ENCODE measurements at regions of chr19 and their contacts with region 1.

Region 1: GRCh38 chr19:40570313-40571004 is 6.2 kb upstream of the SHKBP1 start:
- DNase-seq: peak; percentile 100
- H3K4me3 Mint-ChIP-seq: peak overlapping the region; percentile 66
- H3K27ac Mint-ChIP-seq: peak overlapping the region; percentile 39
- H3K4me1 Mint-ChIP-seq: peaks cover 13% of the 10 kb centered on the region
- H3K27me3 Mint-ChIP-seq: no peaks in the 10 kb centered on the region
- CTCF ChIP-seq: peak; percentile 33

Region 2: GRCh38 chr19:40510526-40511115 is 59.8 kb before region 1 on chr19:
- CTCF ChIA-PET with region 1: no interaction called
- POLR2A ChIA-PET with region 1: no interaction called
- intact Hi-C with region 1: no loop called
- DNase-seq: no peak
- H3K4me3 Mint-ChIP-seq: no peak overlapping the region
- H3K27ac Mint-ChIP-seq: no peak overlapping the region
- H3K4me1 Mint-ChIP-seq: no peaks in the 10 kb centered on the region
- H3K27me3 Mint-ChIP-seq: peaks cover 30% of the 10 kb centered on the region
- CTCF ChIP-seq: no peak

Region 3: GRCh38 chr19:40603389-40604135 is 33.1 kb after region 1 on chr19:
- CTCF ChIA-PET with region 1: interaction called, 10 read pairs
- POLR2A ChIA-PET with region 1: interaction called, 39 read pairs
- intact Hi-C with region 1: loop called (anchors 1 kb)
- DNase-seq: peak; percentile 99
- H3K4me3 Mint-ChIP-seq: peak overlapping the region; percentile 79
- H3K27ac Mint-ChIP-seq: peak overlapping the region; percentile 69
- H3K4me1 Mint-ChIP-seq: peaks cover 47% of the 10 kb centered on the region
- H3K27me3 Mint-ChIP-seq: no peaks in the 10 kb centered on the region
- CTCF ChIP-seq: no peak

Region 4: DNA sequence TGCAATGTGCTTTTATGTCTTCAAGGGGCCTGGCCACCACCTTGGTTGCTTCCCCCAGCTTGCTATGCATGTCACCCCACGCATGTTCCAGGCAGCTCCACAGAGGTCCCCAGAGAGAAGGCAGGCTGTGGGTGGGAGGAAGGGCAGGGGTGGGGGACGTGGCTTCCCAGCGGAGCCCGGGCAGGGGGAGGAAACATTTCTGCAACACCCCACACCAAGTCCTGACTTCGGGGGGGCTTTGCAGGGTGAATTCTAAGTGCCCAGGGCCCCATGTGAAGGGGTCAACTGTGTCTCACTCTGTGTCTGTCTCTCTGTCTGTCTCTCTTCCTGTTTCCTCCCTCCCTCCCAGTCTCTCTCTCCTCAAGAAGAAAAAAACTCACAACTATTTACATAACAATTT is 70.3 kb after region 1 on chr19:
- CTCF ChIA-PET with region 1: interaction called, 18 read pairs
- POLR2A ChIA-PET with region 1: no interaction called
- intact Hi-C with region 1: no loop called
- DNase-seq: no peak
- H3K4me3 Mint-ChIP-seq: no peak overlapping the region
- H3K27ac Mint-ChIP-seq: no peak overlapping the region
- H3K4me1 Mint-ChIP-seq: peaks cover 3% of the 10 kb centered on the region
- H3K27me3 Mint-ChIP-seq: no peaks in the 10 kb centered on the region
- CTCF ChIP-seq: no peak

Region 5: DNA sequence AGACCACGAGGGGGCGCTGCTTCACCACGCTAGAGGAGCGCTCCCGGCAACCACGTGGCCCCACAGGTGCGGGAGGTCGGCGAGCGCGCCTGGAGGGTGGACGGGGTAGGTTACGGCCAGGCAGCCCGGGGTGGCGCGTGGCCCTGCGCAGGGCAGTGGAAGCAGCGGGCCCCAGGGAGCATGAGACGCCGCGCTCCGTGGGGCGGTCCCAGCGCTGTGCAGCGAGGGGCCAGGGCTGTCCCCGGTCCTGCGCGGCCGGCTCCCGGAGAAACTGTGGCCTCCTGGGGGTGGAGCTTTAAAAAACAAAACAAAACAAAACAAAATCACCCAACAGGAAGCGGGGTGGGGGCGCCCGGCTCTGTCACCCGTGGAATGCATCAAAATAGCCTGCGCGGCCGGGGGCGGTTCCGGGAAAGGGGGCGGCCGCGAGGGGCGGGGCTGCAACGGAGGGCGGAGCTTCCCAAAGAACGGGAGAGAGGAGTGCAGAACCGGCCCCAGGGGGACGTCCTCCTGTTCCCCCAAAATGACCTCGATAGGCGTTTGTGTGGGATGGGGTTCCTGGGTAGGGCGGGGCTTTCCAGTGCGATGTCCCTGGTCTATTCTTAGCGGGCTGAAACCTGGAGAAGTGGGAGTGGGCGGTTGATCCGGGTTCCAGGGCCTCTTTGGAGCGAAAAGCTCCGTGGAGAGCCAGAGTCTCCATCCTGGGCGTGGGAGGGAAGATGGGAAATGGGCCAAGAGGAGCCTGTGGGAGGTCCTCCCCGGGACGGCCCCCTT is 92.6 kb after region 1 on chr19:
- CTCF ChIA-PET with region 1: no interaction called
- POLR2A ChIA-PET with region 1: no interaction called
- intact Hi-C with region 1: no loop called
- DNase-seq: peak; percentile 83
- H3K4me3 Mint-ChIP-seq: peak overlapping the region; percentile 77
- H3K27ac Mint-ChIP-seq: peak overlapping the region; percentile 57
- H3K4me1 Mint-ChIP-seq: peaks cover 14% of the 10 kb centered on the region
- H3K27me3 Mint-ChIP-seq: no peaks in the 10 kb centered on the region
- CTCF ChIP-seq: peak; percentile 96